ENCODE measurements at regions of chr14 and their contacts with region 1.

Region 1: GRCh38 chr14:90697577-90698206 is 118.5 kb downstream of the TTC7B start:
- DNase-seq: no peak
- H3K4me3 ChIP-seq: no peak overlapping the region
- H3K27ac ChIP-seq: no peak overlapping the region
- H3K27me3 ChIP-seq: no peaks in the 10 kb centered on the region
- CTCF ChIP-seq: peak; percentile 96

Region 2: DNA sequence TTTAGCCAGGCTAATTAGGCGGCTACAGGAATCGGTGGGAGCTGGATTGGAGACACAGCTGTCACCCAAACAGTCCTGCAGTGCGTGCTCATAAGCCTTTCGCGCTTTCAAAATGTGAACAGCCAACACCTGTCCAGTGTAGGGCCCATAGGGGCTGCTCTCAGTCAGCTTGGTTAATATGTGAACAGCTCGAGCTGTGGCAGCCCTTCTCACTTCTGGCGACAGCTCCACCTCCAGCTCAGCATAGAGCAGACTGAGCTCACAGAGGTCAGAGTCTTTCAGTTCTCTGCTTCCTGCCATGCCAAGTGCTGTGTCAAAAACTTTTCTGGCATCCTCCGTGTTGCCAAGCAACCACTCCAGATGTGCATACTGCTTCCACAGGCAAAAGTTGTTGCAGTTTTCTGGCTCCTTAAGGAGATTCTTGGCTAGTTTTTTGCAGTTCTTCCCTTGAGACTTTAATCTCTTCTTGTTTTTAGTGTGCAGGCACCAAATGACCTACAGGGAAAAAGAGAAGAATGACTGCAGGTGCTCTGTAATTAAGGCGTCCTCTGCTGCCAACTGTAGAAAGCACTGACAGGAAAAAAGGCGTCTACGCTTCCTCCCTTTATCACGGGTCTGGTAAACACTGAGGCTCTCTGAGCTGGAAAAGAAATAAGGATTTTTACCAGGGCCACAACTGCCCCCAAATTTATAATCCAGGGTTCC is 408.9 kb before region 1 on chr14:
- CTCF ChIA-PET with region 1: interaction called, 16 read pairs
- POLR2A ChIA-PET with region 1: no interaction called
- DNase-seq: no peak
- H3K4me3 ChIP-seq: no peak overlapping the region
- H3K27ac ChIP-seq: no peak overlapping the region
- H3K27me3 ChIP-seq: no peaks in the 10 kb centered on the region
- CTCF ChIP-seq: no peak

Region 3: DNA sequence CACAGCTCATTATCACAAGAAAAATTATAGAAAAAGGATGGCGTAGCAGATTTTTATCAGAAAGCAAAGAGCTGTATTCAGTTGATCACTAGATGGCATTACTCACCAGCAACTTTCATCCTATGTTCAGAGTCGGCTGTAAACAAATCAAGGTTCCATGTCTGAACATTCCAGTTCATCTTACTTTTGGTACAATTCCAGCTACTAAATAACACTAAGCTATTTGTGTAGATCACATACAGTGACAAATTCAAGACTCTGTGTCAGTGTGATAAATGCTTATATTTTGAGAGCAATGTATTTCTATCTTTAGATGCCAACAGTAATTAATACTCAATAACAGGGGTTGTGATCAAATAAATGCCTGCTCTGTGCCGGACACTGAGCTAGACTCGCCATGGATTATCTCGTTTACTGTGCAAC is 396.0 kb before region 1 on chr14:
- CTCF ChIA-PET with region 1: interaction called, 57 read pairs
- POLR2A ChIA-PET with region 1: no interaction called
- DNase-seq: peak; percentile 41
- H3K4me3 ChIP-seq: no peak overlapping the region
- H3K27ac ChIP-seq: no peak overlapping the region
- H3K27me3 ChIP-seq: no peaks in the 10 kb centered on the region
- CTCF ChIP-seq: peak; percentile 55

Region 4: DNA sequence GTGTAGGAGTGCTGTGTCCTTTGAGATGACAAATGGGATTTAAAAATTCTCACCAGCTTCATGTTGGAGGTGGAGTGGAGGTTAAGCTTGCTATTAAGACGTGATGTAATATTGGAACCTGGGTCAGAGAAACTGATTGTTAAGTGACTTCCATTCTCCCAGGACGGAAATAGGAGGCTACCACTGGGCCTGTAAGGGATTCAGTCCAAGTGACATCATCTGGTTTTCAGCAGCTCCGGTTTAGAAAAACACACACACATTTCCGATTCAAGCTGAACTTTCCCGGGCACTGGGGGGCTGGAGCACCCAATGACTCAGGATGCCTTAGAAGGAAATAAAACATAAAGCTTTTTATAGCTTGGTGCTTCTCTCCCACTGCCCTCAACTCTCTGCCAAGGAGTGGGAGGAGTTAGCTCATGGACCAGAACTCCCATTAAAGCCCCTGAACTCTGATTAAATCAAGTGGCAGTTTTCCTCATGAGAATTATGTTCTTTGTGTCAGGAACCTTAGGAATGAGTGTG is 288.4 kb before region 1 on chr14:
- CTCF ChIA-PET with region 1: interaction called, 24 read pairs
- POLR2A ChIA-PET with region 1: no interaction called
- DNase-seq: peak; percentile 90
- H3K4me3 ChIP-seq: no peak overlapping the region
- H3K27ac ChIP-seq: peak overlapping the region; percentile 72
- H3K27me3 ChIP-seq: no peaks in the 10 kb centered on the region
- CTCF ChIP-seq: no peak

Region 5: DNA sequence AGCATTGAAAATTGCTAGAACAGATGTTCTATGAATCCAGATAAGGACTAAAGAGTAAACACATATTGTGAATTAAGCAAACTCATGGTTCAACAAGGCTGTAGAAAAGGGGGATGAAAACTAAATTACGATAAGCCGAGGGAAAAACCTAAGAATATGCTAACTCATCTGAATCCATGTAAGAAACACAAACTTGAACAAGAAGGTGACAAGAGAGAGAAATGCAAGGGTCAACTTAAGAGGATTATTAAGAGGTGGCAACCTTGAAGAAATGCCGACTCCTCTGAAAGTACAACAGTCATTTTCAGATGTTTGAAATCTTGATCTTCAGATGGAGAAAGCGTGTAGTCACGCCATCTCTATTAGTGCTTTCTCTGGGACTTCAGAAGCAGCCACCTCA is 10.0 kb before region 1 on chr14:
- CTCF ChIA-PET with region 1: interaction called, 11 read pairs
- POLR2A ChIA-PET with region 1: no interaction called
- DNase-seq: no peak
- H3K4me3 ChIP-seq: no peak overlapping the region
- H3K27ac ChIP-seq: no peak overlapping the region
- H3K27me3 ChIP-seq: no peaks in the 10 kb centered on the region
- CTCF ChIP-seq: no peak

Region 6: GRCh38 chr14:90767899-90768298 is 70.2 kb after region 1 on chr14:
- CTCF ChIA-PET with region 1: no interaction called
- POLR2A ChIA-PET with region 1: no interaction called
- DNase-seq: no peak
- H3K4me3 ChIP-seq: no peak overlapping the region
- H3K27ac ChIP-seq: no peak overlapping the region
- H3K27me3 ChIP-seq: no peaks in the 10 kb centered on the region
- CTCF ChIP-seq: no peak

Measured in AG04450 (cell line).